Activated CD4-positive, alpha-beta T cell treated with anti-CD3 and anti-CD28 coated beads for 36 hours (primary cell): ENCODE measurements at regions of chr2 and their contacts with region 1.

Region 1: DNA sequence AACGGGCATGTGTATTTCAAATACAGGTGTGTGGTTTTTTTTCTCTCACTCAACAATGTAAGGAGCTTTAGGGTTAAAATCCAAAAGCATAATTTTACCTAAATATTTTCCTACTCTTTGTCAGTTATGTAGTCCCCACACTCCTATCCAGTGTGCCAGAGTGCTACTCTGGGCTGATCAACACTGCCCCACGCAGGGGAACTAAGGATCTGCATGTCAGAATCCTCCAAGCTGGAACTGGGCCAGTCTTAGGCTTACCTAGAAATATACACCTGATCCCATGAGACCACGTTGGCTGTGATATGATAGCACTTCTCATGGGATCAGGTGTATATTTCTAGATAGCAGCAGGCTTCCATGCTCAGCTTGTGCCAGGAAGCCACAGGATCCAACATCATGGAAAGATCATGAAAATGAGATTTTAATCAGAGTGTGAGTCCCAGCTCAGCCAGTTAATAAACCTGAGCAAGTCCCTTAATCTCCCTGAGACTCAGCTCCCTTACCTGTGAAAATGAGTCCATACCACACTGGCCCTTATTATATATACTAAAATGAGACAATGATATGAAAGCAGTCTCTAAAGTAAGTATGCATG is 29.7 kb downstream of the CCDC141 start:
- DNase-seq: peak; percentile 79
- ATAC-seq: peak; percentile 98
- H3K4me3 Mint-ChIP-seq: no peak overlapping the region
- H3K27ac Mint-ChIP-seq: no peak overlapping the region
- H3K4me1 Mint-ChIP-seq: peaks cover 24% of the 10 kb centered on the region
- H3K27me3 Mint-ChIP-seq: no peaks in the 10 kb centered on the region

Region 2: DNA sequence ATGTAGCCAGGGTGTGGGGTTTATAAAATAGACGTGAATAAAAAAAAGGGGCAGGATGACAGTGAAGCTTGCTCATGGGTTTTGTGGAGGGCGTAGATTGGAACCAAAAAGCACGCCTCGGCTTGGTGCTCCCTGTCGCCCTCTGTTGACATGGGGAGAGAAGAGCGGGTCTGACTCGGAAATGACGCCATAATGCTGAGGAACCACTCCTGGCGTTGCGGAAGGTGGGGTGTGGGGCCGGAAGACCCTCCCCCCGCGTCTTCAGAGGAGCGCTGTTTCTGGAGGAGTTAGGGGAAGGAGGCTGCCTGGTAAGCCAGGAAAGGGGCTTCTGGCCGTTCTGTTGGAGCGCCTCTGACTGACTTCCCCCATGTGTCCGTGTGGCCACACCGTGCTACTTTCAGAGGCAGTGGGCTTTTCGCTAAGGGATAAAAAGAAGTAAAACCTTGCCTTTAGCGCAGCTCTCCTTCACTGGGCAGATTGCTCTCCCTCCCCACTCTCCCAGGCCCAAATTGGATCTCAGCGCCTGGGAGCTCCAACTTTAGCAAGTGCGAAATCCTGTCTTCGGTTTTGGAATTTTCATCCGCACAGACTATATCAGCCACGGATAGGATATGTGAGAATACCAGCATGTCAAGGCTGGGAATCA is 497.2 kb before region 1 on chr2:
- CTCF ChIA-PET with region 1: no interaction called
- POLR2A ChIA-PET with region 1: no interaction called
- intact Hi-C with region 1: loop called in 1 of 2 experiments (anchors 10 kb)
- DNase-seq: peak; percentile 90
- ATAC-seq: peak; percentile 80
- H3K4me3 Mint-ChIP-seq: peak overlapping the region; percentile 85
- H3K27ac Mint-ChIP-seq: peak overlapping the region; percentile 92
- H3K4me1 Mint-ChIP-seq: peaks cover 55% of the 10 kb centered on the region
- H3K27me3 Mint-ChIP-seq: no peaks in the 10 kb centered on the region

Region 3: GRCh38 chr2:178796079-178796677 is 224.1 kb before region 1 on chr2:
- CTCF ChIA-PET with region 1: interaction called, 3 read pairs
- POLR2A ChIA-PET with region 1: no interaction called
- intact Hi-C with region 1: loop called in 1 of 2 experiments (anchors 1 kb)
- DNase-seq: no peak
- ATAC-seq: no peak
- H3K4me3 Mint-ChIP-seq: no peak overlapping the region
- H3K27ac Mint-ChIP-seq: no peak overlapping the region
- H3K4me1 Mint-ChIP-seq: no peaks in the 10 kb centered on the region
- H3K27me3 Mint-ChIP-seq: no peaks in the 10 kb centered on the region

Region 4: DNA sequence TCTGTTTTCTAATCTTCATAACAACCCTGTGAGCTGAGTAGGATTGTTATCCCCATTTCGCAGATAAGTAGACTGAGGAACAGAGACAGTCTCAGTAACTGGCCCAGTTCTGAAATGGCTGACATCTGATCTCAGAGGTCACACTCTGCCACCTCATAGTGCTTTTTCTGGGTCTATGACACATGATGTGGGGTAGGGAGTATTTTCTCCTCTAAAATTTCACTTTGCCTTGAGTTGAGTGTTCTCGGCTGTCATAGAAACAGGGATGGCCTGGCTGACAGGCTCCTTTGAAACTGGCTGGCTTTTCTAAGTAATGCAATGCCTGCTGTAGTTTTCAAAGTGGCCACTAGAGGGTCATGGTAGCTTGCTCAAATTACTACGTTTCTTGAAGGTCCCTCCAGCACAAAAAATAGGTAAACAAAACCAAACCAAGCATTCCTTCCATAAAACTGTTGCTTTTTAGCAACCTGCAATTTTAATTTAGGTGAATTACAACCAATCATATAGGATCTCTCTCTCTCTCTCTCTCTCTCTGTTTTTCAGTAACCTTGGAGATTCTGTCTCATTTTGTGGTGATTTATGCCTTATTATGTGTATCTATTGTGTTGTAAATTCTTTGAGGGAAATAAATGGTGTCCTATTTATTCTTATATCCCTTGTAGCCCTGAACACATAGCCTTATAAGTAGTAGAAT is 128.8 kb before region 1 on chr2:
- CTCF ChIA-PET with region 1: interaction called, 13 read pairs
- POLR2A ChIA-PET with region 1: no interaction called
- intact Hi-C with region 1: loop called (anchors 1 kb)
- DNase-seq: peak; percentile 79
- ATAC-seq: peak; percentile 90
- H3K4me3 Mint-ChIP-seq: no peak overlapping the region
- H3K27ac Mint-ChIP-seq: no peak overlapping the region
- H3K4me1 Mint-ChIP-seq: peaks cover 9% of the 10 kb centered on the region
- H3K27me3 Mint-ChIP-seq: no peaks in the 10 kb centered on the region